ENCODE measurements at regions of chr13 and their contacts with region 1.

Region 1: GRCh38 chr13:92745258-92745657 is 481.3 kb upstream of the GPC6 start:
- DNase-seq: no peak
- ATAC-seq: no peak
- H3K4me3 ChIP-seq: no peak overlapping the region
- H3K27ac ChIP-seq: no peak overlapping the region
- H3K4me1 ChIP-seq: no peaks in the 10 kb centered on the region
- H3K27me3 ChIP-seq: no peaks in the 10 kb centered on the region
- CTCF ChIP-seq: no peak
- EP300 ChIP-seq: no peak
- POLR2A ChIP-seq: no peak
- RAD21 ChIP-seq: no peak

Region 2: GRCh38 chr13:93413972-93414717 is 668.9 kb after region 1 on chr13:
- CTCF ChIA-PET with region 1: no interaction called
- POLR2A ChIA-PET with region 1: no interaction called
- in situ Hi-C with region 1: loop called (anchors 25 kb)
- intact Hi-C with region 1: no loop called
- DNase-seq: no peak
- ATAC-seq: no peak
- H3K4me3 ChIP-seq: no peak overlapping the region
- H3K27ac ChIP-seq: no peak overlapping the region
- H3K4me1 ChIP-seq: no peaks in the 10 kb centered on the region
- H3K27me3 ChIP-seq: no peaks in the 10 kb centered on the region
- CTCF ChIP-seq: no peak
- EP300 ChIP-seq: no peak
- POLR2A ChIP-seq: no peak
- RAD21 ChIP-seq: no peak